Right ventricle myocardium inferior (tissue), 1 donor: ENCODE measurements at regions of chr1 and their contacts with region 1.

Region 1: GRCh38 chr1:156728597-156729462 is at the start of gene ISG20L2:
- DNase-seq: peak; percentile 98
- ATAC-seq: peak; percentile 95
- total RNA-seq, gene ISG20L2: 13.1 TPM

Region 2: DNA sequence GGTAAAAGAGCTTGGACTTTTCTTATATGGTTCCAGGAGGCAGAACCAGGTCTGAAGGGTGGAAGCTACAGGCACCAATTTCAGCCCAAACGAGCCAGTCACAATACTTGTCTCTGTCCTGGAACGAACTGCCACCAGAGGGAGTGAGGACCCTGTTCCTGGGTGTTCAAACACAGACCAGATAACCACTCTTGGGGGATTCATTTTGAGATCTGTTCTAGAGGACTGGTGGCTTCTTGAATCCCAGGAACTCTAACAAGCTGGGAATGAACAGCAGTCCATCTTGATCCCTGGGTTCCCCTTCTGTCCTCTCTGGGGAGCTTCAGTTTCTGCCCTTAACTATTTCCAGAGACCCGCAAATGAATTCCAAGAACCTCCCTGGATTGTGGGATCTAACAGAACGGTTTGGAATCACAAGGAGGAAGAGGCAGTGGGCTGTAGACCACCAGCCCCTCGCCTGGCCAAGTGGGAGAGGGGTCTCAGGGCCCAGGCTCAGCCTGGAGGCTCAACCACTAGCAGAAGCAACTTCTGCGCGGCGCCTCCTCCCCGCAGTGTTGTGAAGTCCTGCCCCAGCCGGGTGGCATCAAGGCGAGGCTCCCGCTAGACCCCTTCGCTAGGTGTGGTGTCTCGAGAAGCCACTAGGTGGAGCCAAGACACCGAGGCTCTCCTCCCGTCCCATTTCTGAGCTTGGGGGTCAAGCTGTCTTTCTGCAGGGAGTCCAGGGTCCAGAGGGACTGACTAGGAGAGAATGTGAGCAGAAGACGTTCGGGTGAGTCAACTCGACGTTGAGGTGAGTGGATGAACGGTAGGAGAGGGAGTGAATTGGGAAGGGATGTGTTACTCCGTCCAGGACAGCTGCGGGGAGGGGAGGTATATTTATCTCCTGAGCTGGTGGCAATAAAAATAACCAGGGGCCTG is 39.5 kb before region 1 on chr1:
- intact Hi-C with region 1: loop called (anchors 1 kb)
- DNase-seq: peak; percentile 79
- ATAC-seq: peak; percentile 87